ENCODE measurements at regions of chr3 and their contacts with region 1.

Region 1: GRCh38 chr3:16090024-16090423 is 84.5 kb upstream of the GALNT15 start:
- DNase-seq: peak; percentile 80
- H3K4me3 ChIP-seq: no peak overlapping the region
- H3K27ac ChIP-seq: no peak overlapping the region
- H3K4me1 ChIP-seq: peaks cover 23% of the 10 kb centered on the region
- H3K27me3 ChIP-seq: no peaks in the 10 kb centered on the region
- CTCF ChIP-seq: no peak
- POLR2A ChIP-seq: no peak

Region 2: DNA sequence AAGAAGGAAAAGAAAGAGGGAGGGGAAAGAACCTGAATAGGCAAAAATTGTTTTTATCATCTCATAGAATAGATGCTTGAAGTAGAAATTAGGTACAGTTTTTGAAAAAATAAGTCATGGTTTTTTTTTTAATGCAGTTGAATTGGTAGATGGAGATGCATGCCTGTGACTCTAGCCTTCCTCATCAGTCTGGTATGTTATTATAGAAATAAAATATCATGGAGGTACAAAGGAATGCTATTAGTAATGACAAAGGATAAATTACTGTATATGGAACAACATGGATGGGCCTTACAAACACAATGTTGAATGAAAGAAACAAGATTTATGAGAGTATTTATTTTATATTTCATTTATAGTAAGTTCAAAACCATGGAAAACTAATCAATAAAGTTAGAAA is 77.9 kb before region 1 on chr3:
- CTCF ChIA-PET with region 1: no interaction called
- POLR2A ChIA-PET with region 1: no interaction called
- dilution Hi-C with region 1: no loop called
- intact Hi-C with region 1: loop called (anchors 1 kb)
- DNase-seq: no peak
- H3K4me3 ChIP-seq: no peak overlapping the region
- H3K27ac ChIP-seq: no peak overlapping the region
- H3K4me1 ChIP-seq: peaks cover 8% of the 10 kb centered on the region
- H3K27me3 ChIP-seq: peaks cover 0 to 5% of the 10 kb centered on the region in 2 experiments
- CTCF ChIP-seq: no peak
- POLR2A ChIP-seq: no peak

Region 3: DNA sequence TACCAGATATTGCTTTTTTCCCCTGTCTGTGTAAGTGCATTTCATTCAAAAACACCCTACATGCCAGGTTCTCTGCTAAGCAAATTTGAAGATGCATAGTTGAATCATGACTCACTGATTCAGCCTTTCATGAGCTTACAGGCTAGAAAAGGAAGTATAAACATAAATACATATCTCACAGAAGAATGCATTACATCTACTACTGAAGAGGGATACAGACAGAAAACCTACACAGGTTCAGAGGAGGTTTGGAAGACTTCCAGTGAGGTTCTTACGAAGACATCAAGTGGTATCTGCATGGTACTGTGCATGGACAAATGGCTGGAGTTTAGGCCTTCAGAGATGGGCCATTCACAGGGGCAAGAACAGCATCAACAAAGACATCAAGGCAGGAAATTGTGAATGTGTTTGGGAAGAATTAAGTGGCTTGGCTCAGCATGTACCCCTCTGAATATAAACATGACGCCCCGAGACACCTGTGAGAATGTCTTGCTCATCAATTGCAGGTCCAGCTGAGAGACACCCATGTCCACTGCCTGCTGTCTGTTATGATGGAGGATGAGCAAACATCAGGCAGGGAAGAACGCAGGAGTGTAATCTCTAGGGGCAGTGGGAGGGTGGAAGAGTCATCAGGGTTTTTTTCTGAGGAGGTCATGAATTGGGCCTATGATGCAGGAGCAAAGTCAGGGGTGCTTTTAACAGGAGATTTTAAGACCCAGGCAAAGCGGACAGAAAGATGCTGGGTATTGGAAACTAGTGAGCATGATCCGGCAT is 20.7 kb before region 1 on chr3:
- CTCF ChIA-PET with region 1: interaction called, 6 read pairs
- POLR2A ChIA-PET with region 1: no interaction called
- dilution Hi-C with region 1: no loop called
- intact Hi-C with region 1: loop called (anchors 1 kb)
- DNase-seq: peak; percentile 72
- H3K4me3 ChIP-seq: no peak overlapping the region
- H3K27ac ChIP-seq: peak overlapping the region; percentile 80
- H3K4me1 ChIP-seq: peaks cover 66% of the 10 kb centered on the region
- H3K27me3 ChIP-seq: no peaks in the 10 kb centered on the region
- CTCF ChIP-seq: no peak
- POLR2A ChIP-seq: no peak

Region 4: GRCh38 chr3:16130066-16130465 is 40.0 kb after region 1 on chr3:
- CTCF ChIA-PET with region 1: no interaction called
- POLR2A ChIA-PET with region 1: no interaction called
- dilution Hi-C with region 1: no loop called
- intact Hi-C with region 1: loop called (anchors 5 kb)
- DNase-seq: no peak
- H3K4me3 ChIP-seq: no peak overlapping the region
- H3K27ac ChIP-seq: no peak overlapping the region
- H3K4me1 ChIP-seq: no peaks in the 10 kb centered on the region
- H3K27me3 ChIP-seq: no peaks in the 10 kb centered on the region
- CTCF ChIP-seq: no peak
- POLR2A ChIP-seq: no peak

Region 5: DNA sequence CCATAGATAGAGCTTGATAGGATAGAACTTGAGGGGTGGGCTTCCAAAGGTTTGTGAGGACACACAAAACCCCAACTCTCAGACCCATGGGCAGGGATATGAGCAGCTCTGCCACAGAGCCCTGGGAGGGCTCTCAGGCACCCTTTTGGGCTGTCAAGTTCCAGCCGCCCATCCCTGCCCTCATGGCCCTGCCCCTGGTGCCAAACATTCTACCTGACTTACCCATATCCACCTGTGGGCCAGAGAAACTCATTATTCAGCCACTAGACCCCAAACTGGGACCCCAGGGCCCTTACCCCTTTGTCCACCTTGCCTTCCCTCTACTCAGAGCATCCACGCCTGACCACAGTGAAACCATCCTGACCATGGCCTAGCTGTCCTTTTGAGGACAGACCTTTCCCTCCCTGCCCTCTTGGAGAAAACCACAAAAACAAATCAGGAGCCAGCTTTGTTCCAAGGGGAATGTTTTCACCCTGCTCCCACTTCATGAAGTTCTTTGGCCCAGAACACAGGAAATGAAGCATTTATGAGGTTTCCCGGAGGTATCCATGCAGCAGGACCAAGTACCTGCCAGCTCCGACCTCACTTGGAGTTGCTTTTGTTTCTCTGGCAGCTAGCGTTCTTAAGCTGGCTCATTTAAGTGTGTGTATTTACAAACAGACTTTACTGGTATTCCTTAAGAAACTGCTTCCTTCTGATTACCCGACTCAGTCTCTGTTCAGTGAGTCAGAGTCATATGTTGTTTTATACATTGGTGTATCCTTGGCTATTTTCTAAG is 50.3 kb after region 1 on chr3:
- CTCF ChIA-PET with region 1: interaction called, 5 read pairs
- POLR2A ChIA-PET with region 1: no interaction called
- dilution Hi-C with region 1: no loop called
- intact Hi-C with region 1: loop called (anchors 1 kb)
- DNase-seq: peak; percentile 91
- H3K4me3 ChIP-seq: no peak overlapping the region
- H3K27ac ChIP-seq: peak overlapping the region; percentile 83
- H3K4me1 ChIP-seq: peaks cover 16% of the 10 kb centered on the region
- H3K27me3 ChIP-seq: no peaks in the 10 kb centered on the region
- CTCF ChIP-seq: no peak
- POLR2A ChIP-seq: peak; percentile 19

Region 6: DNA sequence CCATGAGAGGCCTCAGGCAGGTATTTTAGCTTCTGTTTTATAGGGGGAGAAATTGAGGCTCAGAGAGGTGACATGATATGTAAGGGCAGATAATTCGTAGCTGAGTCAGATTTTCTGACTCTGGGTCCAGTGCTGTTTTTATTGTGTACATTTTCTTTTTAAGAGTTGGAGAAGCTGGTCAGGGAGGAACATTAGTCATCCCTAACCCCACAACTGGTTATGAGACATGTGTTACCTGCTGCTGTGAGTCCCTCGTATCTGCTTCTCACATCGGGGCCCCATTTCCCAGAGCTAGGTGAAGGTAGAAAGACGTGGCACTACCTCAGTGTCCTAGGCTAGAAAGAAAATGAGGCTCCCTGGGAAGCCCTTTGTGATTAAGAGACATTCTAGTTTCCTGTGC is 113.0 kb after region 1 on chr3:
- CTCF ChIA-PET with region 1: no interaction called
- POLR2A ChIA-PET with region 1: no interaction called
- dilution Hi-C with region 1: no loop called
- intact Hi-C with region 1: no loop called
- DNase-seq: no peak
- H3K4me3 ChIP-seq: no peak overlapping the region
- H3K27ac ChIP-seq: no peak overlapping the region
- H3K4me1 ChIP-seq: peaks cover 12% of the 10 kb centered on the region
- H3K27me3 ChIP-seq: peaks cover 0 to 2% of the 10 kb centered on the region in 2 experiments
- CTCF ChIP-seq: no peak
- POLR2A ChIP-seq: no peak